Activated naive CD4-positive, alpha-beta T cell treated with anti-CD3 and anti-CD28 coated beads for 36 hours (primary cell): ENCODE measurements at regions of chr6 and their contacts with region 1.

Region 1: DNA sequence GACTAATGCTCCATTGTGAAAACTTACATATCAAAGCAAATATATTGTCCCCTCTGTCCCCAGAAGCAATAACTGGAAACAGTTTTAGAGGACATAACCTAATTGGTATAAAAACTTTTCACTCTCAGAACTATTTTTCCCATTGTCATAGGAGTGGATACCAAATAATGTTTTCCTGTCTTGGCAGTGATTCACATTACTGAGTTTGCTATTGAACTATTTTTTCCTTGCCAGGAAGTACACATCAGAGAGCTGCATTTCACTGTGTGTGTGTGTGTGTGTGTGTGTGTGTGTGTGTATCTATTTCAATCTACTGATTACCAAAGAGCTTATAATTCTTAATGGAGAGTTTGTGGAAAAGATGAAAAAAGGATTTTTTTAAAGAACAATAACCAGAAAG is 45.4 kb downstream of the AKAP12 start:
- DNase-seq: no peak
- H3K4me3 Mint-ChIP-seq: no peak overlapping the region
- H3K27ac Mint-ChIP-seq: peak overlapping the region; percentile 3
- H3K4me1 Mint-ChIP-seq: peaks cover 33% of the 10 kb centered on the region
- H3K27me3 Mint-ChIP-seq: peaks cover 5% of the 10 kb centered on the region

Region 2: DNA sequence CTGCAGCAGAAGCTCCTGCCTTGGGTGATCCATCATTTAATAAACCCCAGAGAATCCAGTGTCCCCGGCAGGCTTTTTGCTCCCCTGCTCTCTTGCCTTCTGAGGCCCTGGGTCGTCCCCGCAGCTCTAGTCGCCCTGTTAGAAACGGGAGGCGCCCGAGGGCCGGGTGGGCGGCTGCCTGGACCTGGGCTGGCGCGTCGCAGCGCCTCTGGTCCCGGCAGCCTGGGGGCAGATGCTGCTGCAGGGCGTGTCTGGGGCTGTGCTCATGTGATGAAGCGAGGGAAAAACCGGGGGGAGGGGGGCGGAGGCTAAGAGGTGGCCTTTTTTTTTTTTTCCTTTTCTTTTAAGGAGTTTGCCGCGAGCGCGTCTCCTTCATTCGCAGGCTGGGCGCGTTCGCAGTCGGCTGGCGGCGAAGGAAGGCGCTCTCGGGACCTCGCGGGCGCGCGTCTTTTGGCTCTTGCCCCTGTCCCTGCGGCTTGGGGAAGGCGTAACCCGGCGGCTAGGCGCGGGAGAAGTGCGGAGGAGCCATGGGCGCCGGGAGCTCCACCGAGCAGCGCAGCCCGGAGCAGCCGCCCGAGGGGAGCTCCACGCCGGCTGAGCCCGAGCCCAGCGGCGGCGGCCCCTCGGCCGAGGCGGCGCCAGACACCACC is 45.0 kb before region 1 on chr6:
- CTCF ChIA-PET with region 1: no interaction called
- intact Hi-C with region 1: loop called (anchors 2 kb)
- DNase-seq: peak; percentile 71
- H3K4me3 Mint-ChIP-seq: peak overlapping the region; percentile 83
- H3K27ac Mint-ChIP-seq: no peak overlapping the region
- H3K4me1 Mint-ChIP-seq: peaks cover 8% of the 10 kb centered on the region
- H3K27me3 Mint-ChIP-seq: peaks cover 60% of the 10 kb centered on the region

Region 3: DNA sequence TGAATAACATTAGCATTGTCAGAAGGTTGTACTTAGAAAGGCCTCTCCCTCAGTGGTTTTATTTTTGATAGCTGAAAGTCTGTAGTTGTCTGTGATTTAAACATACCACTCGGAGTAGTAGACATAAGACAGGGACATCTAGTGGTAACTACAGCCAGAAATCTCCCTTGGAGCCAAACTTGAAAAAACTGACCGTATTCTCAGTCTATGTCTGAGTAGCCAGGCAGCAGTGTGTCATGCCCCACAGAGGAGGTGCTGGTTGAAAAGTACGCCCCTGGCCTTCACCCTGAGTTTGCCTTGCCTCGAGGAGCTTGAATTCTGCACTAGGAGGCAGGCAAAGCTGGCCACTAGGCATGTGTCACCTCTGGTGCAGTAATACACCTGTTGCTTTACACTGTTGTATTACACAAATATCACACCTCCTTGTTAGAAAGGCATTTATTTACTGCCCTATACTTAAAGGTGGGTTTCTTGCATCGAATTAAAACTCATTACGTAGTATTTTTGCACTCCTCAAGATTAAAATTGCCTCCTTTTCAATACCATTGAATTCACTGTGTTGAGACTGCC is 85.5 kb after region 1 on chr6:
- CTCF ChIA-PET with region 1: no interaction called
- intact Hi-C with region 1: loop called (anchors 2 kb)
- DNase-seq: no peak
- H3K4me3 Mint-ChIP-seq: no peak overlapping the region
- H3K27ac Mint-ChIP-seq: no peak overlapping the region
- H3K4me1 Mint-ChIP-seq: peaks cover 33% of the 10 kb centered on the region
- H3K27me3 Mint-ChIP-seq: no peaks in the 10 kb centered on the region